ENCODE measurements at regions of chr12 and their contacts with region 1.

Region 1: DNA sequence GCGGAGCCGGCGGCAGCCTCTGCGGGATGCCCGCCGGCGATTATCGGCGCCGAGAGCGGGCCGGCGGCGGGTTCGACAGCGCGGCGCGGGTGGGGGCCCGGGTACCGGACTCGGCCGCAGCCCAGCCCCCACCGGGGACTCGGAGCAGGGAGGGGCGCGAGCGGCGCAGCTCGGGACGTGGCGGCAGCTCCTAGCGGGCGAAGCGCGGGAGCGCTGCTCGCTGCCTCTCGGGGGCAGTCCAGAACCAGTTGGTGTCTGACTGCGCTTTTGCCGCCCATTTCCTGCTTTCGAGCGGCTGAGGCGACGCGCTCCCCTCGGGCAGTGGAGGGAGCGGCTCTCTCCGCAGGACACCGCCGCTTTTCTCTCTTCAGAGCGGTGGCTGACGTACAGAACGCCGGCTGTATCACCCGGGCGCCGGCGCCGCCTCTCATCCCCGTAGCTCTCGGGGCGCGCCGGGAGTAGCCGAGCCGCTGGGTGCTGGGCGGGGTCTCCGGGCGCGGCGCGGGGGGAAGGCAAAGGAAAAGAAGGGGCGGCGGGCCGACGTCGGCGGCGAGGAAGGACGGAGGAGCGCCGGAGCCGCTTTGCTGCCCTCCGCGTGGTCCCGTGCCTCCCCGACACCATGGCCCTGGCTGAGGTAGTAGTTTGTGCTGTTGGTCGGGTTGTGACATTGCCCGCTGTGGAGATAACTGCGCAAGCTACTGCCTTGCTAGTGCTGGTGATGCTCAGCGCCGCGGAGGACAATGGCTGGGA is 136.6 kb downstream of the MON2 start:
- DNase-seq: peak; percentile 63 to 93 (median 76)
- ATAC-seq: peak; percentile 64
- H3K4me3 ChIP-seq: peak overlapping the region; percentile 82
- H3K4me3 Mint-ChIP-seq: peak overlapping the region; percentile 99
- H3K27ac ChIP-seq: peak overlapping the region; percentile 99 to 100
- H3K27ac Mint-ChIP-seq: peak overlapping the region; percentile 100
- H3K4me1 ChIP-seq: peaks cover 11% of the 10 kb centered on the region
- H3K4me1 Mint-ChIP-seq: peaks cover 42% of the 10 kb centered on the region
- H3K27me3 ChIP-seq: no peaks in the 10 kb centered on the region
- H3K27me3 Mint-ChIP-seq: no peaks in the 10 kb centered on the region
- CTCF ChIP-seq: peak; percentile 48

Region 2: GRCh38 chr12:62466594-62467491 is 136.4 kb before region 1 on chr12 and contains the start of gene MON2:
- CTCF ChIA-PET with region 1: interaction called, 4 read pairs
- POLR2A ChIA-PET with region 1: interaction called, 25 read pairs
- intact Hi-C with region 1: loop called (anchors 5 kb)
- DNase-seq: peak; percentile 68 to 94 (median 82)
- ATAC-seq: peak; percentile 94
- H3K4me3 ChIP-seq: peak within 1 kb of the TSS; percentile 72
- H3K4me3 Mint-ChIP-seq: peak within 1 kb of the TSS; percentile 90
- H3K27ac ChIP-seq: peak within 1 kb of the TSS; percentile 82 to 85
- H3K27ac Mint-ChIP-seq: peak within 1 kb of the TSS; percentile 90
- H3K4me1 ChIP-seq: peaks cover 23% of the 10 kb centered on the region
- H3K4me1 Mint-ChIP-seq: peaks cover 31% of the 10 kb centered on the region
- H3K27me3 ChIP-seq: no peaks in the 10 kb centered on the region
- H3K27me3 Mint-ChIP-seq: no peaks in the 10 kb centered on the region
- CTCF ChIP-seq: no peak
- total RNA-seq, gene MON2: 51.8 to 52.6 TPM

Region 3: DNA sequence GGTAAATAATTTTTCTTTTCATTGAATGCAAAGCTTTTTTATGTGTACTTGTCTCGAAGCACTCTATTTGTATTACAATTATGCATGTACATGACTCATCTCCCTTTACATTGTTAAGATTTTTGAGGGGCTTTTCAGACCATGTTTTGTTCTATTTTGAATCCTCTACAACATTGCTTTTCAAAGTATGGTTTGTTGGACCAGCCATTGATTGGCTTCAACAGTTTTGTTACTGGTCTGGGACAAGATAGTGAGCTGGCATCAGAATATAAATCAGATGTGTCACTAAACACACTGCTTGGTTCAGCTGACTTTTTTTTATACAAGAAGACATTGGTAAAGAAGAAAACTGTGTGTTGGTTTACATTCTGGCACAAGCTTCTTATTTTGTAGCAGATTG is 14.3 kb before region 1 on chr12:
- CTCF ChIA-PET with region 1: interaction called, 4 read pairs
- POLR2A ChIA-PET with region 1: interaction called, 27 read pairs
- intact Hi-C with region 1: no loop called
- DNase-seq: no peak
- ATAC-seq: no peak
- H3K4me3 ChIP-seq: no peak overlapping the region
- H3K4me3 Mint-ChIP-seq: no peak overlapping the region
- H3K27ac ChIP-seq: no peak overlapping the region
- H3K27ac Mint-ChIP-seq: no peak overlapping the region
- H3K4me1 ChIP-seq: no peaks in the 10 kb centered on the region
- H3K4me1 Mint-ChIP-seq: no peaks in the 10 kb centered on the region
- H3K27me3 ChIP-seq: no peaks in the 10 kb centered on the region
- H3K27me3 Mint-ChIP-seq: no peaks in the 10 kb centered on the region
- CTCF ChIP-seq: no peak

Region 4: DNA sequence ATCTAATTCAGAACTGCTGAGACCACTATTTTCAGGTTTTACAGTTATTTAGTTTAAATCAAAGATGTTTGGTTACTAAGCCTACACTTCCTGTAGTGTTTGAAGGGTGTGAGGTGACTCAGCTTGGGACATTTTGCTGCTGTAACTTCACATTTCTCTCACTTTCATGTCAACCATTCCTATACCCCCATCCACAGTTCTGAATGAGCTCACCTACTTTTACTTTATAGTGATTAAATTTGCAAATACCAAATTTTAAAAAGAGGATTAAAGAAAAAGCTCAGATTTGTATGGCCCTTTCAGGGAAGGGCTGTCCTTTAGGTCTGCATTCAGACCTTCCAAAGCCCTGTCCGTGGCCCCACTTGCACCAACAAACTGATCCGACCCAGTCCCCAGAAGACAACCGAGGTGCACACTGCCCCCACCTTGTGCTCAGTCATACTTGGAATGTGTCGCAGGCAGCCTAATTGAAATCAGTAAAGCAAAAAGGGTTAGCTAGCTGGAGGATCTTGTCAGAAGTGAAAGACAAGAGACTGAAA is 37.7 kb after region 1 on chr12:
- CTCF ChIA-PET with region 1: interaction called, 3 read pairs
- POLR2A ChIA-PET with region 1: interaction called, 12 read pairs
- intact Hi-C with region 1: no loop called
- DNase-seq: peak in 5 of 14 experiments; percentile 7 to 53 (median 40)
- ATAC-seq: peak; percentile 87
- H3K4me3 ChIP-seq: no peak overlapping the region
- H3K4me3 Mint-ChIP-seq: no peak overlapping the region
- H3K27ac ChIP-seq: no peak overlapping the region
- H3K27ac Mint-ChIP-seq: no peak overlapping the region
- H3K4me1 ChIP-seq: peaks cover 3% of the 10 kb centered on the region
- H3K4me1 Mint-ChIP-seq: peaks cover 14% of the 10 kb centered on the region
- H3K27me3 ChIP-seq: peaks cover 3 to 11% of the 10 kb centered on the region in 2 experiments
- H3K27me3 Mint-ChIP-seq: peaks cover 12% of the 10 kb centered on the region
- CTCF ChIP-seq: no peak